Mammary epithelial cell (primary cell): ENCODE measurements at regions of chr3 and their contacts with region 1.

Region 1: GRCh38 chr3:185473290-185473815 is 25.5 kb downstream of the TMEM41A start:
- DNase-seq: no peak
- H3K4me3 ChIP-seq: no peak overlapping the region
- H3K27ac ChIP-seq: no peak overlapping the region
- H3K4me1 ChIP-seq: no peaks in the 10 kb centered on the region
- H3K27me3 ChIP-seq: no peaks in the 10 kb centered on the region
- CTCF ChIP-seq: no peak

Region 2: GRCh38 chr3:185439745-185440466 is 33.4 kb before region 1 on chr3:
- CTCF ChIA-PET with region 1: no interaction called
- dilution Hi-C with region 1: loop called (anchors 5 kb)
- in situ Hi-C with region 1: no loop called
- intact Hi-C with region 1: no loop called
- DNase-seq: no peak
- H3K4me3 ChIP-seq: no peak overlapping the region
- H3K27ac ChIP-seq: no peak overlapping the region
- H3K4me1 ChIP-seq: no peaks in the 10 kb centered on the region
- H3K27me3 ChIP-seq: no peaks in the 10 kb centered on the region
- CTCF ChIP-seq: no peak

Region 3: GRCh38 chr3:185519021-185519420 is 45.7 kb after region 1 on chr3:
- CTCF ChIA-PET with region 1: no interaction called
- dilution Hi-C with region 1: loop called (anchors 5 kb)
- in situ Hi-C with region 1: no loop called
- intact Hi-C with region 1: no loop called
- DNase-seq: peak; percentile 34
- H3K4me3 ChIP-seq: no peak overlapping the region
- H3K27ac ChIP-seq: no peak overlapping the region
- H3K4me1 ChIP-seq: no peaks in the 10 kb centered on the region
- H3K27me3 ChIP-seq: no peaks in the 10 kb centered on the region
- CTCF ChIP-seq: peak; percentile 17 to 47